Body of pancreas (tissue), 4 donors: ENCODE measurements at regions of chr2 and their contacts with region 1.

Region 1: GRCh38 chr2:65554765-65555591 is 122.6 kb upstream of the SPRED2 start:
- DNase-seq: no peak
- ATAC-seq: no peak
- H3K4me3 ChIP-seq: no peak overlapping the region
- H3K27ac ChIP-seq: no peak overlapping the region
- H3K4me1 ChIP-seq: no peaks in the 10 kb centered on the region
- H3K27me3 ChIP-seq: no peaks in the 10 kb centered on the region
- CTCF ChIP-seq: no peak
- POLR2A ChIP-seq: no peak

Region 2: GRCh38 chr2:65264821-65265670 is 289.9 kb before region 1 on chr2:
- intact Hi-C with region 1: loop called (anchors 5 kb)
- DNase-seq: peak; percentile 17 to 66 (median 30)
- ATAC-seq: peak; percentile 67
- H3K4me3 ChIP-seq: no peak overlapping the region
- H3K27ac ChIP-seq: no peak overlapping the region
- H3K4me1 ChIP-seq: no peaks in the 10 kb centered on the region
- H3K27me3 ChIP-seq: no peaks in the 10 kb centered on the region
- CTCF ChIP-seq: peak; percentile 40 to 76 (median 67)
- POLR2A ChIP-seq: no peak